ENCODE measurements at regions of chr12 and their contacts with region 1.

Region 1: GRCh38 chr12:121590476-121591143 is 9.8 kb upstream of the KDM2B start:
- DNase-seq: peak; percentile 80
- H3K4me3 Mint-ChIP-seq: peak overlapping the region; percentile 85
- H3K27ac Mint-ChIP-seq: peak overlapping the region; percentile 96
- H3K4me1 Mint-ChIP-seq: peaks cover 30% of the 10 kb centered on the region
- H3K27me3 Mint-ChIP-seq: no peaks in the 10 kb centered on the region

Region 2: GRCh38 chr12:121579981-121580868 is 10.4 kb before region 1 on chr12:
- CTCF ChIA-PET with region 1: interaction called, 4 read pairs
- intact Hi-C with region 1: loop called (anchors 1 kb)
- DNase-seq: peak; percentile 85
- H3K4me3 Mint-ChIP-seq: peak overlapping the region; percentile 90
- H3K27ac Mint-ChIP-seq: peak overlapping the region; percentile 92
- H3K4me1 Mint-ChIP-seq: peaks cover 16% of the 10 kb centered on the region
- H3K27me3 Mint-ChIP-seq: no peaks in the 10 kb centered on the region

Region 3: GRCh38 chr12:122031342-122032216 is 441.0 kb after region 1 on chr12:
- CTCF ChIA-PET with region 1: no interaction called
- intact Hi-C with region 1: no loop called
- DNase-seq: peak; percentile 63
- H3K4me3 Mint-ChIP-seq: no peak overlapping the region
- H3K27ac Mint-ChIP-seq: no peak overlapping the region
- H3K4me1 Mint-ChIP-seq: no peaks in the 10 kb centered on the region
- H3K27me3 Mint-ChIP-seq: no peaks in the 10 kb centered on the region

Region 4: GRCh38 chr12:122265931-122266771 is 675.5 kb after region 1 on chr12 and contains the start of gene VPS33A:
- CTCF ChIA-PET with region 1: no interaction called
- intact Hi-C with region 1: no loop called
- DNase-seq: peak; percentile 95
- H3K4me3 Mint-ChIP-seq: peak within 1 kb of the TSS; percentile 94
- H3K27ac Mint-ChIP-seq: peak within 1 kb of the TSS; percentile 96
- H3K4me1 Mint-ChIP-seq: peaks cover 23% of the 10 kb centered on the region
- H3K27me3 Mint-ChIP-seq: peaks cover 3% of the 10 kb centered on the region
- total RNA-seq, gene VPS33A: 15.9 to 17.2 TPM